ENCODE measurements at regions of chr7 and their contacts with region 1.

Region 1: GRCh38 chr7:22082886-22083703 is 137.4 kb upstream of the CDCA7L start:
- DNase-seq: peak; percentile 85
- H3K4me3 Mint-ChIP-seq: peak overlapping the region; percentile 71
- H3K27ac Mint-ChIP-seq: no peak overlapping the region
- H3K4me1 Mint-ChIP-seq: peaks cover 11% of the 10 kb centered on the region
- H3K27me3 Mint-ChIP-seq: peaks cover 20% of the 10 kb centered on the region

Region 2: GRCh38 chr7:20786779-20787659 is 1296.1 kb before region 1 on chr7 and contains the start of gene SP8:
- CTCF ChIA-PET with region 1: no interaction called
- intact Hi-C with region 1: loop called (anchors 5 kb)
- DNase-seq: peak; percentile 38
- H3K4me3 Mint-ChIP-seq: peak within 1 kb of the TSS; percentile 69
- H3K27ac Mint-ChIP-seq: no peak within 1 kb of the TSS
- H3K4me1 Mint-ChIP-seq: peaks cover 27% of the 10 kb centered on the region
- H3K27me3 Mint-ChIP-seq: peaks cover 75% of the 10 kb centered on the region
- total RNA-seq, gene SP8: 0.07 TPM in 1 of 2 experiments, not detected in the other

Region 3: DNA sequence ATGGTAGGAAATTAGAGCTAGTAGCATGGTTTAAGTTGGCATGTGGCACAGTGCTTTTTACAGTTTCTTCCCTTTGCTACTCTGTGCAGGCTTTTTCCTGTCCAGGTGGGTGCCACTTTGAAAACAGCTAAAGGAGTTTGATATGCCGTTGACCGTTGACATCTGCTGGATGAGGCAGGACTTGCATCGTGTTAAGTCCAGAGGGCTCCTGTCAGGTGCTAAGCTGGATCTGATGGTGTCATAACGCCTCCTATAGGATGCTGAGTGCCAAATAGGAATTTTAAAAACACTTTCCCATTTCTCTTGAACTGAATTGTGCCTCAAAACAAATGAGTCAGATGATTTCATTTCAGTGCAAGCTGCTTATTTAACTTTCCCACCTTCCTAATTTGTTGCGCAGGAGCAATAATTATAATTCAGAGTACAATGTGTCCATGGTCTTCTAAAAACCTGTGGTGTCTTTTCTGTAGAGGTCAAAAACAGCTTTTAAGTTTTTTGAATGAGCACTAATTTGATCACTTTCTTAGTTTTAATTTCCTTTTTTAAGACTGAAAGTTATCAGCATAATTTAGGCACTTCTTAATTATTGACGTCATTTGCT is 315.7 kb before region 1 on chr7:
- CTCF ChIA-PET with region 1: interaction called, 4 read pairs
- intact Hi-C with region 1: loop called (anchors 2 kb)
- DNase-seq: peak; percentile 59
- H3K4me3 Mint-ChIP-seq: no peak overlapping the region
- H3K27ac Mint-ChIP-seq: no peak overlapping the region
- H3K4me1 Mint-ChIP-seq: peaks cover 16% of the 10 kb centered on the region
- H3K27me3 Mint-ChIP-seq: no peaks in the 10 kb centered on the region

Region 4: DNA sequence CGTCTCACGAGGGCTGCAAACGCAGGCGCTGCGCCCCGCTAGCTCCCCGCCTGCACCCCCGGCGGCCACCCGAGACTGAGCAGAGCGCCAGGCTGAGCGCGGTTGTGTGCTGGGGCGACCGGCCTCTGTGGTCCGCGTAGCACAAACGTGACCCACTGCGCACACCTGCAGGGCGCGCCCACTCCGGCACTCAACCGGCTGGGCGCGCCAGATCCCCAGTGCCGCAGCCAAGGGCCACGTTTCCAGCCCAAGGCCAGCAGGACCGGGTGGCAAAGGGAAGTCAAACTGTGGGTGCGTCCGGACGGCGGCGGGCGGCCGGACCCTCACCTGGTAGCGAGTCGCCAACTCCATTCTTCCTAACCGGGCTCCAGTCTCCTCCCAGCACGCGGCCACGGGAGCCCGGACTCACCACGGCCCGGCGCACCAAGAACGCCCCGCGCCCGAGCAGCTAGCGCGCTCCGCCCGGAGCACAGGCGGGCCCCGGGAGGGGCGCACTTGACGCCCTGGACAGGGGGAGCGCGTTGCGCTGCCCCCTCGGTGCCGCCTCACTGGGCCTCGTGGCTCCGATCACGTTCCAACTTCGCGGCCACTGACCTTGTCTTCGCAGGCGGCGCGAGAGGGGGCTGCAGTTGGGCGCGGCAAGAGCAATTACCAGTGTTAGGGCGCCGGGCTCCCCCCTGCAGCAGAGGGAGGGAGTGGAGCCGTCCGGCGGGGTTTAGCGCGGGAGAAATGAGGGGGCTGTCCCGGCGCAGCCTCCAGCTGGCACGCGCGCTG is 137.5 kb before region 1 on chr7 and contains the start of gene CDCA7L:
- CTCF ChIA-PET with region 1: no interaction called
- intact Hi-C with region 1: loop called (anchors 5 kb)
- DNase-seq: peak; percentile 85
- H3K4me3 Mint-ChIP-seq: peak within 1 kb of the TSS; percentile 86
- H3K27ac Mint-ChIP-seq: peak within 1 kb of the TSS; percentile 84
- H3K4me1 Mint-ChIP-seq: peaks cover 63% of the 10 kb centered on the region
- H3K27me3 Mint-ChIP-seq: no peaks in the 10 kb centered on the region
- total RNA-seq, gene CDCA7L: 101 to 103 TPM

Region 5: GRCh38 chr7:22001345-22002004 is 81.6 kb before region 1 on chr7:
- CTCF ChIA-PET with region 1: no interaction called
- intact Hi-C with region 1: loop called (anchors 2 kb)
- DNase-seq: peak; percentile 24
- H3K4me3 Mint-ChIP-seq: no peak overlapping the region
- H3K27ac Mint-ChIP-seq: no peak overlapping the region
- H3K4me1 Mint-ChIP-seq: peaks cover 3% of the 10 kb centered on the region
- H3K27me3 Mint-ChIP-seq: no peaks in the 10 kb centered on the region

Region 6: GRCh38 chr7:22094413-22095342 is 11.6 kb after region 1 on chr7:
- CTCF ChIA-PET with region 1: interaction called, 25 read pairs
- intact Hi-C with region 1: no loop called
- DNase-seq: no peak
- H3K4me3 Mint-ChIP-seq: no peak overlapping the region
- H3K27ac Mint-ChIP-seq: no peak overlapping the region
- H3K4me1 Mint-ChIP-seq: no peaks in the 10 kb centered on the region
- H3K27me3 Mint-ChIP-seq: peaks cover 4% of the 10 kb centered on the region

Region 7: GRCh38 chr7:22103255-22103969 is 20.3 kb after region 1 on chr7:
- CTCF ChIA-PET with region 1: interaction called, 25 read pairs
- intact Hi-C with region 1: no loop called
- DNase-seq: peak; percentile 89
- H3K4me3 Mint-ChIP-seq: no peak overlapping the region
- H3K27ac Mint-ChIP-seq: no peak overlapping the region
- H3K4me1 Mint-ChIP-seq: peaks cover 6% of the 10 kb centered on the region
- H3K27me3 Mint-ChIP-seq: peaks cover 5% of the 10 kb centered on the region